Activated CD8-positive, alpha-beta memory T cell treated with anti-CD3 and anti-CD28 coated beads, Interleukin-2, amount 10 ng/mL, durations not matched to agents 7 days and 5 days (primary cell): ENCODE measurements at regions of chr11 and their contacts with region 1.

Region 1: DNA sequence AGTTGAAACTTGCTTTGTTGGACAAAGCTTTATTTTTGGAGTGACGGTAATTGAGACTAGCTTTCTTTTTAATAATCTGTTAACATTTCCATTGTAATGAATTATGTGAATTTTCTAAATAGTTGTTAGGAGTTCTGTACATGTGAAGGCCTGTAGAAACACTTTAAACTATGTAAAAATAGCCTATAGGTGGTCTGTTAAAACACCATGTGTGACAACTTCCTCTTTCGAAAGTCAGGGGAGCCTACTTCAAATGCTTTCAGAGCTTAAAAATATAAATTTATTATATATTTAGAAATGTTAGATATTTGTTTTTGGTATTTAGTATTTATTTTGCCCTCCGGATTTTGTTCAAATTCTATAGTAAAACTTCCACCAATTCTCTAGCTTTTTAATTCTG is 28.7 kb downstream of the DDIAS start:
- DNase-seq: no peak
- ATAC-seq: no peak
- H3K4me3 Mint-ChIP-seq: no peak overlapping the region
- H3K27ac Mint-ChIP-seq: no peak overlapping the region
- H3K4me1 Mint-ChIP-seq: peaks cover 10% of the 10 kb centered on the region
- H3K27me3 Mint-ChIP-seq: no peaks in the 10 kb centered on the region

Region 2: GRCh38 chr11:82873919-82874333 is 56.3 kb before region 1 on chr11:
- CTCF ChIA-PET with region 1: no interaction called
- DNase-seq: no peak
- ATAC-seq: no peak
- H3K4me3 Mint-ChIP-seq: no peak overlapping the region
- H3K27ac Mint-ChIP-seq: no peak overlapping the region
- H3K4me1 Mint-ChIP-seq: peaks cover 21% of the 10 kb centered on the region
- H3K27me3 Mint-ChIP-seq: no peaks in the 10 kb centered on the region

Region 3: GRCh38 chr11:82942376-82942775 is 12.1 kb after region 1 on chr11:
- CTCF ChIA-PET with region 1: interaction called, 10 read pairs
- DNase-seq: no peak
- ATAC-seq: no peak
- H3K4me3 Mint-ChIP-seq: no peak overlapping the region
- H3K27ac Mint-ChIP-seq: no peak overlapping the region
- H3K4me1 Mint-ChIP-seq: peaks cover 3% of the 10 kb centered on the region
- H3K27me3 Mint-ChIP-seq: no peaks in the 10 kb centered on the region

Region 4: GRCh38 chr11:82978422-82979099 is 48.3 kb after region 1 on chr11:
- CTCF ChIA-PET with region 1: no interaction called
- DNase-seq: no peak
- ATAC-seq: peak; percentile 84
- H3K4me3 Mint-ChIP-seq: peak overlapping the region; percentile 11
- H3K27ac Mint-ChIP-seq: peak overlapping the region; percentile 44
- H3K4me1 Mint-ChIP-seq: peaks cover 25% of the 10 kb centered on the region
- H3K27me3 Mint-ChIP-seq: no peaks in the 10 kb centered on the region